ENCODE measurements at regions of chr6 and their contacts with region 1.

Region 1: DNA sequence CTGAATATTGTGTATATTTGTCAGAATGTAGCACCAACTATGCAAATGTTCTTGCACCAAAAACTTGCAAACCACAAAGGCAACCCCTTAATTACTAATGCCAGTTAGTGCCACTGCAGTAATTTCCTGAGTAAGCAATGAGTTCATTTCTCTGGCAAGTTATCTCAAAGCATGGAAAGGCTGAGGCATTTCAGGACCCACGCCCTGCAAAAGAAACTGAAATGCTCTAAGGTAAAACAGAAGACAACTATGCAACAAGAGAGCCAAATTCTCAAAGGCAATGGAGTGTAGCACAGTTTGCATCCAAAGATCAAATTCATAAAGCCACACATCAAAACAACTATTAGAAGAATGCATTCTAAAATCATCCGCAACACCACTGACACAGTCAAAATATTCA is 994.4 kb downstream of the EYS start:
- H3K4me3 Mint-ChIP-seq: no peak overlapping the region
- H3K27ac Mint-ChIP-seq: no peak overlapping the region
- H3K4me1 Mint-ChIP-seq: no peaks in the 10 kb centered on the region
- H3K27me3 Mint-ChIP-seq: no peaks in the 10 kb centered on the region

Region 2: DNA sequence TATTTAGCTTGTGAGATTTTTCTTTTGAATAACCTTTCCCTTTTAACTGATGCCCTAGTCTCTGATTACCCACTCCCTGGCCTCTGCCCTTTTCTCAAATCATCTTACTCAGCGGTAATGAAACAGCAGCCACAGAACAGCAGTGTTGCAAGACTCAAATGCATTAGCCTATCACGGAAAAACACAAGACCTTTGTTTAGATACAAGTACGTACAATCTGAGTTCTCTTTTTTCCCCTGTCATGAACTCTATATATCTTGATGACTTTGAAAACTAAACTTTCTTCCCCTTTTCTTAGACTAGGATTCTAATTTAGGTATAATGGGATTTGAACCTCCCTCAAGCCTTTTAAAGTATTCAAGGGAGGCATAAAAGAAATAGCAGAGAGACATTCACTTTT is 40.5 kb before region 1 on chr6:
- intact Hi-C with region 1: loop called (anchors 1 kb)
- H3K4me3 Mint-ChIP-seq: no peak overlapping the region
- H3K27ac Mint-ChIP-seq: no peak overlapping the region
- H3K4me1 Mint-ChIP-seq: no peaks in the 10 kb centered on the region
- H3K27me3 Mint-ChIP-seq: no peaks in the 10 kb centered on the region

Region 3: DNA sequence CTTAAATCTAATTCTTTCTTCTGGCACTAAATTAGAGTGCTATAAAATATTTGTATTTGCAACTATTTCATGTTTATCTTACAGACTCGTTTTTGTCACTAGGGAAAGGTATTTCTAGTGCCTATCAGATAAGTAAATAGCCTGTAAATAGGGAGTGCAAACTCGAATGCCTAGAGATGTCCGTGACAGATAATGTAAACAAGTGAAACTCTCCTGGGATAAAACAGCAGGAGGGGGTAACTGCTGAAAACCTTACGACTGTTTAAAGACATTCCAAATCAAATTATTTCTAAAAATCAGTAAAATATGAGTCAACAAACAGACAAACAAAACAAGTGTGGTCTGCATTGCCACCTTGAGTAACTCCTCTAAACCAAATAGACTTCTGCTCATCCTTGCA is 62.3 kb after region 1 on chr6:
- intact Hi-C with region 1: no loop called
- H3K4me3 Mint-ChIP-seq: no peak overlapping the region
- H3K27ac Mint-ChIP-seq: no peak overlapping the region
- H3K4me1 Mint-ChIP-seq: no peaks in the 10 kb centered on the region
- H3K27me3 Mint-ChIP-seq: no peaks in the 10 kb centered on the region

Measured in dendritic cell treated with granulocyte-macrophage colony-stimulating factor and Interleukin-4, amounts not matched to agents 40 ng/mL and 50 ng/mL, for 4 days (primary cell).